Calu3 (cell line): ENCODE measurements at regions of chr6 and their contacts with region 1.

Region 1: DNA sequence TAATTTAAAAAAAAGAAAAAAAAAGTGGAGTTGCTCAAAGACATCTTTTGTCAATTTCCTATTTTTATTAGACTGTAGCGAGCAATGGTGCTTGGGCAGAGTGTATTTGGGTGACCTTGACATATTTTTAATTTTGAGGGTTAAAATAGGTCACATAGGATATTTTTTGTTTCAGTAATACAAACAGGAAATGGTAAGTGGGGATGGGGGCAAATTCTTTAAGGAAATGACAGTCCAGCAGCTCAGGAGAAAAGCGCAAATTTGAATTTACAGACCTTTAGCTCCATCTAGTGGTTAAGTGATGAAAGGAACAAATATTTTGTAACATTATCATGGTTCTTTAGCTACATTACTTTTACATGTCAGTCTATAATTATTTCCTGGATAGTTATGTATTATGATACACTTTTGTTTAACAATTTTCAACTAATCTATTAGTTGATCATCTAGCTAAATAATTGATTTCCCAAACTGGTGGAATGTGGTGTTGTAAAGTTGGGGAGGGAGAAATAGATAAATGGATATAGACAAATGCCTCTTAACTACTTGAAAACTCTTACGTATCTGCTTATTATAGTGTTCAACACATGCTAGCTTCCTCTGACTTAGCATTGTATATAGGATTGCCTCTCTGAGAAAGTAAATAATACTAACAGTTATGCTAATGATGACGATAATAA is 10.0 kb downstream of the CITED2 start:
- DNase-seq: no peak
- H3K4me3 Mint-ChIP-seq: no peak overlapping the region
- H3K27ac Mint-ChIP-seq: no peak overlapping the region
- H3K4me1 Mint-ChIP-seq: no peaks in the 10 kb centered on the region
- H3K27me3 Mint-ChIP-seq: no peaks in the 10 kb centered on the region
- CTCF ChIP-seq: peak; percentile 20

Region 2: GRCh38 chr6:138817822-138818308 is 546.6 kb before region 1 on chr6:
- CTCF ChIA-PET with region 1: interaction called, 8 read pairs
- intact Hi-C with region 1: loop called (anchors 5 kb)
- DNase-seq: peak; percentile 90
- H3K4me3 Mint-ChIP-seq: peak overlapping the region; percentile 17
- H3K27ac Mint-ChIP-seq: peak overlapping the region; percentile 94
- H3K4me1 Mint-ChIP-seq: peaks cover 28% of the 10 kb centered on the region
- H3K27me3 Mint-ChIP-seq: no peaks in the 10 kb centered on the region
- CTCF ChIP-seq: no peak

Region 3: GRCh38 chr6:139124887-139125672 is 239.4 kb before region 1 on chr6:
- CTCF ChIA-PET with region 1: no interaction called
- intact Hi-C with region 1: loop called (anchors 2 kb)
- DNase-seq: peak; percentile 39
- H3K4me3 Mint-ChIP-seq: no peak overlapping the region
- H3K27ac Mint-ChIP-seq: no peak overlapping the region
- H3K4me1 Mint-ChIP-seq: no peaks in the 10 kb centered on the region
- H3K27me3 Mint-ChIP-seq: peaks cover 16% of the 10 kb centered on the region
- CTCF ChIP-seq: no peak

Region 4: GRCh38 chr6:139219271-139219729 is 145.1 kb before region 1 on chr6:
- CTCF ChIA-PET with region 1: interaction called, 46 read pairs
- intact Hi-C with region 1: loop called (anchors 1 kb)
- DNase-seq: peak; percentile 56
- H3K4me3 Mint-ChIP-seq: no peak overlapping the region
- H3K27ac Mint-ChIP-seq: no peak overlapping the region
- H3K4me1 Mint-ChIP-seq: peaks cover 8% of the 10 kb centered on the region
- H3K27me3 Mint-ChIP-seq: no peaks in the 10 kb centered on the region
- CTCF ChIP-seq: peak; percentile 40

Region 5: GRCh38 chr6:139230391-139230840 is 134.0 kb before region 1 on chr6:
- CTCF ChIA-PET with region 1: no interaction called
- intact Hi-C with region 1: loop called (anchors 5 kb)
- DNase-seq: no peak
- H3K4me3 Mint-ChIP-seq: no peak overlapping the region
- H3K27ac Mint-ChIP-seq: no peak overlapping the region
- H3K4me1 Mint-ChIP-seq: no peaks in the 10 kb centered on the region
- H3K27me3 Mint-ChIP-seq: no peaks in the 10 kb centered on the region
- CTCF ChIP-seq: no peak